Gastrocnemius medialis (tissue), 4 donors: ENCODE measurements at regions of chr16 and their contacts with region 1.

Region 1: GRCh38 chr16:84484579-84485254 is 19.7 kb downstream of the MEAK7 start:
- DNase-seq: peak in 1 of 2 donors; percentile 22
- ATAC-seq: peak; percentile 56 to 65
- H3K4me3 ChIP-seq: no peak overlapping the region
- H3K27ac ChIP-seq: no peak overlapping the region
- H3K4me1 ChIP-seq: no peaks in the 10 kb centered on the region
- H3K27me3 ChIP-seq: no peaks in the 10 kb centered on the region
- CTCF ChIP-seq: peak; percentile 35 to 71 (median 61)
- POLR2A ChIP-seq: no peak

Region 2: DNA sequence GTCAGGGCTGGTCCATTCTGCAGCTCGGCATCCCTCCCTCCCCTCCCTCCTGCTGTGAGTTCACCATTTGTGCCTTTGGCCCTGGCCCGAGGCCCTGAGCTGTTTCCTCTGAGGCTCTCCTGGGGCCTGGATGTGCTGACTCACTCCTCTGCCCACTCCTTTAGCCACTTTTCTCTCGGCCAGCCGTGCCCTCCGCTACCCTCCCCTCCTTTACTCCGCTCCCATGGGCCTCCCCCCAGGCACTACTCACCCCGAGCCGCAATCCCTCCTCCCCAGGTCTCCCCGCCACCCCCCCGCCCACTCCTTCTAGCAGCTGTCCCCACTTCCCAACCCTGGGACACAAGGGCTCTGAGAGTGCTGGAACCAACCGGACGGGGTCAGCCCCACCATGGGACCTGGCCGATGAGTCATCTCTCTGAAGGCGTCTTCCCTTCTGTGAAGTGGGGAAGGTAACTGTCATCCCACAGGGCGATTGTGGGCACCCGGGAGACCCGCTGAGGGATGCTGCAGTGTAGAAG is 256.3 kb before region 1 on chr16:
- in situ Hi-C with region 1: no loop called
- intact Hi-C with region 1: no loop called
- DNase-seq: peak; percentile 15 to 61
- ATAC-seq: peak; percentile 62 to 66
- H3K4me3 ChIP-seq: peak overlapping the region in 2 of 4 donors; percentile 8 to 25
- H3K27ac ChIP-seq: peak overlapping the region in 3 of 4 donors; percentile 38 to 69 (median 44)
- H3K4me1 ChIP-seq: peaks cover 7 to 12% of the 10 kb centered on the region in 2 donors
- H3K27me3 ChIP-seq: no peaks in the 10 kb centered on the region
- CTCF ChIP-seq: no peak
- POLR2A ChIP-seq: no peak

Region 3: DNA sequence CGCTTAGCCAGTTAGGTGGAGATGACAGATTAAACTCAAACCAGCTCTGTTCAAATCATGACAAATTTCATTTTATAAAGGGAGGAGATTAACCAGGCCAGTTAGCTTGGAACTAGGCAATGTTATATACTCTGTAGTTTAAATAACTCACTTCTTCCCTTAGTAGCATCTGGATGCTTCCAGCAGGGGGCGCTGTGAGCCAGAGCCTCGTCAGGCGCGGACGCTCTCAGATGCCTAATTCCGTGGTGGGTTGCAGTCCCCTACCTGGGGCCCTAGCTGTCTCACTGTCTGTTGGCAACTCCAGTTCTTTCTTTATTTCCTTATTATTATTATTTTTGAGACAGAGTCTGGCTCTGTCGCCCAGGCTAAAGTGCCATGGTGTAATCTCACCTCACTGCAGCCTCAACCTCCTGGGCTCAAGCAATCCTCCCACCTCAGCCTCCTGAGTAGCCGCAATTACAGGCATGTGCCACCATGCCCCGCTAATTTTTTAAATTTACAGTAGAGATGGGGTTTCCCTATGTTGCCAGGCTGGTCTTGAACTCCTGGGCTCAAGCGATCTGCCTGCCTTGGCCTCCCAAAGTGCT is 207.4 kb before region 1 on chr16:
- in situ Hi-C with region 1: loop called in 2 of 4 experiments (anchors 25 kb)
- intact Hi-C with region 1: no loop called
- DNase-seq: no peak
- ATAC-seq: no peak
- H3K4me3 ChIP-seq: no peak overlapping the region
- H3K27ac ChIP-seq: no peak overlapping the region
- H3K4me1 ChIP-seq: no peaks in the 10 kb centered on the region
- H3K27me3 ChIP-seq: peaks cover 0 to 4% (median 3%) of the 10 kb centered on the region in 3 donors
- CTCF ChIP-seq: peak; percentile 45 to 79 (median 71)
- POLR2A ChIP-seq: no peak

Region 4: GRCh38 chr16:84893849-84894599 is 409.3 kb after region 1 on chr16:
- in situ Hi-C with region 1: no loop called
- intact Hi-C with region 1: no loop called
- DNase-seq: no peak
- ATAC-seq: no peak
- H3K4me3 ChIP-seq: no peak overlapping the region
- H3K27ac ChIP-seq: no peak overlapping the region
- H3K4me1 ChIP-seq: no peaks in the 10 kb centered on the region
- H3K27me3 ChIP-seq: no peaks in the 10 kb centered on the region
- CTCF ChIP-seq: no peak
- POLR2A ChIP-seq: no peak

Region 5: GRCh38 chr16:85908444-85908843 is 1423.7 kb after region 1 on chr16:
- in situ Hi-C with region 1: no loop called
- intact Hi-C with region 1: no loop called
- DNase-seq: no peak
- ATAC-seq: no peak
- H3K4me3 ChIP-seq: no peak overlapping the region
- H3K27ac ChIP-seq: no peak overlapping the region
- H3K4me1 ChIP-seq: no peaks in the 10 kb centered on the region
- H3K27me3 ChIP-seq: peaks cover 0 to 6% (median 3%) of the 10 kb centered on the region in 3 donors
- CTCF ChIP-seq: no peak
- POLR2A ChIP-seq: no peak